Sigmoid colon (tissue), 7 donors: ENCODE measurements at regions of chr20 and their contacts with region 1.

Region 1: GRCh38 chr20:57006411-57007170 is 259.9 kb downstream of the BMP7 start:
- DNase-seq: no peak
- H3K4me3 ChIP-seq: no peak overlapping the region
- H3K27ac ChIP-seq: no peak overlapping the region
- H3K4me1 ChIP-seq: peaks cover 0 to 20% (median 14%) of the 10 kb centered on the region in 4 donors
- H3K27me3 ChIP-seq: peaks cover 0 to 4% (median 0%) of the 10 kb centered on the region in 3 donors
- CTCF ChIP-seq: no peak
- EP300 ChIP-seq: no peak
- POLR2A ChIP-seq: no peak

Region 2: DNA sequence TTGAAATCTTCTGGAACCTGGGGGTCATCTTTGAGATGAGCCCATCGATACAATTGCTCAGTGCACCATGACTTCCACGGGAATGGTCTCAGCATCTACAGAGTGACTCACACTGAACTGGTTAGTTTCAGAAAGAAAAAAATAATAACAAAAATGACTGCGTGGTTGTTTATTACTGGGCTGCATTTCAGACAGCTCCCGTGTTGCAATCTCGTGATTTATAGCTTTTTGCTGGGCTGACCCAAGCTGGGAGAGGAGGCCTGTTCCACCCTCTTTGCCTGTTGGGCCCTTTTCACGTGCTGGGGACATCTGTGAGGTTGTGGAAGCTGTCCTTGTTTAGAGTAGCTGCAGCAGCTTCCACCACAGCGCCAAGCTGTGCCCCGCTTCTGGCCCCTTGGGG is 34.3 kb after region 1 on chr20:
- intact Hi-C with region 1: loop called (anchors 5 kb)
- DNase-seq: peak; percentile 84
- H3K4me3 ChIP-seq: no peak overlapping the region
- H3K27ac ChIP-seq: peak overlapping the region in 3 of 4 donors; percentile 44 to 67 (median 57)
- H3K4me1 ChIP-seq: peaks cover 0 to 59% (median 26%) of the 10 kb centered on the region in 4 donors
- H3K27me3 ChIP-seq: no peaks in the 10 kb centered on the region
- CTCF ChIP-seq: no peak
- EP300 ChIP-seq: peak; percentile 34 to 88 (median 60)
- POLR2A ChIP-seq: no peak